PC-9 (cell line): ENCODE measurements at regions of chr4 and their contacts with region 1.

Region 1: GRCh38 chr4:123812066-123812390 is 415.4 kb downstream of the SPRY1 start:
- DNase-seq: no peak
- H3K4me3 ChIP-seq: no peak overlapping the region
- H3K27ac ChIP-seq: no peak overlapping the region
- H3K4me1 ChIP-seq: 0 out of 2 replicates have a peak, but pooled peaks cover 3% of the 10 kb centered on the region
- H3K27me3 ChIP-seq: no peaks in the 10 kb centered on the region
- CTCF ChIP-seq: no peak

Region 2: DNA sequence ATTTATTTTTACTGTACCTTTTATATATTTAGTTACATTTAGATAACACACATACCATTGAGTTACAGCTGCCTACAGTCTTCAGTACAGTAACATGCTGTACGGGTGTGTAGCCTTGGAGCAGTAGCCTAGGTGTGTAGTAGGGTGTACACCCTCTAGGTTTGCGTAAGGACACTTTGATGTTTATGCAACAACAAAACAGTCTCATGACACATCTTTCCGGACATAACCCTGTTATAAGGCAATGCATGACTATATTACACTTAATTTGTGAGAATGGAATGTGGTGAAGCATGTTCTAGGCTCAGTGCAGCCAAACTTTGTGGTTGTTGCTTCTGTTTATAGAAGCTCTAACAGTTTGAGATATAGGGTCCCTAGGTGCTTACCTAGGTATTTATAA is 350.0 kb before region 1 on chr4:
- CTCF ChIA-PET with region 1: no interaction called
- POLR2A ChIA-PET with region 1: no interaction called
- intact Hi-C with region 1: no loop called
- DNase-seq: peak in 1 of 2 experiments; percentile 97
- H3K4me3 ChIP-seq: no peak overlapping the region
- H3K27ac ChIP-seq: peak overlapping the region; percentile 31; the same call in 1 of the 2 replicates
- H3K4me1 ChIP-seq: peaks cover 17% of the 10 kb centered on the region
- H3K27me3 ChIP-seq: no peaks in the 10 kb centered on the region
- CTCF ChIP-seq: no peak

Region 3: DNA sequence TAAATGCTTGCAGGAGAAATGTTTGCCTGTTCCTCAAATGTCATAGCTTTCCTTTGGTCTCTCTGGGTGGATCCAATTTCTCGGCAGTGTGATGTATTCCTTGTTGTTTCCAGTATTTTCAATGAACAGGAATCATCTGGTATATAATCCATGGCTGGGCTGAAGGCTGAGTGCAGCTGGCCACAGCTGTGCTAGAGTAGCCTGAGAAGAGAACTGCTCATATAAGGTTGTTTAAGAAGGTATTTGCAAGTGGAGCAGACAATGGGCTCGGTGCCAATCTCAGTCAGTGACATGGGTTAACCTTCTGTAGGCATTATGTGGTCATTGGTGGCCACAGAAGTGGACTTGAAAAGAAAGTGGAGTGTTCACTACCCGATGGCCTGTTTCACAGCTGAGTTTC is 25.1 kb before region 1 on chr4:
- CTCF ChIA-PET with region 1: no interaction called
- POLR2A ChIA-PET with region 1: no interaction called
- intact Hi-C with region 1: loop called (anchors 1 kb)
- DNase-seq: no peak
- H3K4me3 ChIP-seq: no peak overlapping the region
- H3K27ac ChIP-seq: no peak overlapping the region
- H3K4me1 ChIP-seq: peaks cover 4% of the 10 kb centered on the region; the same call in 1 of the 2 replicates
- H3K27me3 ChIP-seq: no peaks in the 10 kb centered on the region
- CTCF ChIP-seq: no peak